ENCODE measurements at regions of chr14 and their contacts with region 1.

Region 1: GRCh38 chr14:32252030-32252670 is 49.1 kb upstream of the RNU6-8 start:
- DNase-seq: peak; percentile 85
- ATAC-seq: peak; percentile 79
- H3K4me3 ChIP-seq: no peak overlapping the region
- H3K27ac ChIP-seq: no peak overlapping the region
- H3K4me1 ChIP-seq: peaks cover 9% of the 10 kb centered on the region
- H3K27me3 ChIP-seq: no peaks in the 10 kb centered on the region
- CTCF ChIP-seq: peak; percentile 97

Region 2: GRCh38 chr14:31360919-31361662 is 891.1 kb before region 1 on chr14:
- CTCF ChIA-PET with region 1: no interaction called
- POLR2A ChIA-PET with region 1: no interaction called
- intact Hi-C with region 1: loop called (anchors 5 kb)
- DNase-seq: peak; percentile 75
- ATAC-seq: peak; percentile 82
- H3K4me3 ChIP-seq: no peak overlapping the region
- H3K27ac ChIP-seq: peak overlapping the region; percentile 15
- H3K4me1 ChIP-seq: peaks cover 29% of the 10 kb centered on the region
- H3K27me3 ChIP-seq: no peaks in the 10 kb centered on the region
- CTCF ChIP-seq: no peak

Region 3: DNA sequence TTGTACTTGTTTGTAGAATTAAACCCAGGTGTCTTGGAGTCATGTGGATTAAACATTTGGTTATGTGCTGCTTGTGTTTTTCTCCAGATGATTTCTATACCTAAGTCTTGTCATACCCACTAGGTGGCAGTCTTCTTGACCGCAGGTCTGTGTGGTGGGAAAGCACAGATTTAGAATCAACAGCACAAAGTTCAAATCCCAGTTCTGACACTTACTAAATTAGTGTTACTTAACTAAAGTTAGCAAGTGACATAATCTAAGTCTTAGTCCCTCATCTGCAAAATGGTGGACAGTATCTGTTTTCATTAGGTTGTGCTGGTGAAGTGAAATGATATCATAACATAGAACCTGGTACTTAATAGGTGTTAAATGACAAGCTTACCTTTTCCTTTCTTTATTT is 326.0 kb before region 1 on chr14:
- CTCF ChIA-PET with region 1: interaction called, 5 read pairs
- POLR2A ChIA-PET with region 1: no interaction called
- intact Hi-C with region 1: loop called (anchors 2 kb)
- DNase-seq: peak; percentile 64
- ATAC-seq: no peak
- H3K4me3 ChIP-seq: no peak overlapping the region
- H3K27ac ChIP-seq: no peak overlapping the region
- H3K4me1 ChIP-seq: peaks cover 20% of the 10 kb centered on the region; the same call in 1 of the 2 replicates
- H3K27me3 ChIP-seq: no peaks in the 10 kb centered on the region
- CTCF ChIP-seq: peak; percentile 89

Region 4: DNA sequence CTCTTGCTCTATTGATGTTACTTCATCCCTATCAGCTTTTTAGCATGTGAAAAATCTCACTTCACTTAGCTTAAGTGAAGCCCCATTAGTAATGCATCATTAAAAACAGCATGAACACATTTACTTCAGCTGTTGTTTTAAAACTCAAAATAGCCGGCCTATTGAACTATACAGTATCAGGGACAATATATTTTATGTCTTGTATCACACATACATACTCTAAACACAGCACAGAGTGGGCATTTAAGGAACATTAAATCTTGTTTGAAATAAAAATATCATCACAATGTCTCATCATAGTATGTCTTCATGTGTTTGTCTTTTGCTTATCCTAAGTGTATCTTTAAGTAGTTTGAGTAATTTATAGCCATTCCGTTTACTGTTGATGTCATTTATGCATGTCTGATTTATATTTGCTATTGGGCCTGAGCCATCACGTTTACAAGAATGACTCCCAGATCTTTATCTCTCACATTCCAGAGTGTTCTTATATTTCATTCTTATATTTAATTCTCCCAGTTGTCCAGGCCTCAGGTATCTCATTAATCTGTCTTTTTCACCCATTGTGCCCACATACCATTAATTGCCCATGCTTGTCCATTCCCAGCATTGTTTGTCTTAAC is 117.6 kb before region 1 on chr14:
- CTCF ChIA-PET with region 1: no interaction called
- POLR2A ChIA-PET with region 1: no interaction called
- intact Hi-C with region 1: no loop called
- DNase-seq: peak; percentile 93
- ATAC-seq: peak; percentile 92
- H3K4me3 ChIP-seq: no peak overlapping the region
- H3K27ac ChIP-seq: peak overlapping the region; percentile 79
- H3K4me1 ChIP-seq: peaks cover 23% of the 10 kb centered on the region
- H3K27me3 ChIP-seq: no peaks in the 10 kb centered on the region
- CTCF ChIP-seq: no peak

Region 5: GRCh38 chr14:32202998-32203882 is 48.9 kb before region 1 on chr14 and contains the start of gene RNU6-8:
- CTCF ChIA-PET with region 1: interaction called, 3 read pairs
- POLR2A ChIA-PET with region 1: no interaction called
- intact Hi-C with region 1: loop called (anchors 2 kb)
- DNase-seq: peak; percentile 92
- ATAC-seq: peak; percentile 68
- H3K4me3 ChIP-seq: peak within 1 kb of the TSS; percentile 87
- H3K27ac ChIP-seq: peak within 1 kb of the TSS; percentile 65
- H3K4me1 ChIP-seq: peaks cover 21% of the 10 kb centered on the region; the same call in 1 of the 2 replicates
- H3K27me3 ChIP-seq: no peaks in the 10 kb centered on the region
- CTCF ChIP-seq: no peak
- total RNA-seq, gene RNU6-8: not detected in 2 replicates

Region 6: DNA sequence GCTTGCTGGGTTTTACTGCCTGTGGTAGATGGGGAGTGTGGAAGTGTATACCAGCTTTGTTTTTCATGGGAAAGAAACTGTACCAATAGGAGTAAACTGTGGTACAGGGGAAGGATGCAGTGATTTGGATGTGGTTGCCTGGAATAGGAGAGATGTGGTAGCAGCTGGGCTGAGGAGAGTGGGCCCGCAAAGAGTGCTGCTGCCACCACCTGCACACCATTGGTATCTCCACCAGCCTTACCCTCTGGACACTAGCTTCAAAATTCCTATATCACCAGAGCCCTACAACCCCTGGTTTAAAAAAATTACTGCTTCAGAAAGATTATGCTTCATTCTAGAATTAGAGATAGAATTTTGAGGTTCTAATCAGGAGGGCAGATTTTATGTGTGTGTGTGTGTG is 130.6 kb after region 1 on chr14:
- CTCF ChIA-PET with region 1: interaction called, 31 read pairs
- POLR2A ChIA-PET with region 1: no interaction called
- intact Hi-C with region 1: loop called (anchors 1 kb)
- DNase-seq: peak; percentile 59
- ATAC-seq: peak; percentile 97
- H3K4me3 ChIP-seq: no peak overlapping the region
- H3K27ac ChIP-seq: no peak overlapping the region
- H3K4me1 ChIP-seq: peaks cover 28% of the 10 kb centered on the region
- H3K27me3 ChIP-seq: no peaks in the 10 kb centered on the region
- CTCF ChIP-seq: peak; percentile 88

Region 7: GRCh38 chr14:32509632-32510187 is 257.6 kb after region 1 on chr14:
- CTCF ChIA-PET with region 1: interaction called, 14 read pairs
- POLR2A ChIA-PET with region 1: no interaction called
- intact Hi-C with region 1: loop called (anchors 2 kb)
- DNase-seq: peak; percentile 80
- ATAC-seq: peak; percentile 69
- H3K4me3 ChIP-seq: peak overlapping the region; percentile 43
- H3K27ac ChIP-seq: peak overlapping the region; percentile 40
- H3K4me1 ChIP-seq: peaks cover 52% of the 10 kb centered on the region
- H3K27me3 ChIP-seq: no peaks in the 10 kb centered on the region
- CTCF ChIP-seq: no peak

Measured in PC-3 (cell line).